ENCODE measurements at regions of chr3 and their contacts with region 1.

Region 1: DNA sequence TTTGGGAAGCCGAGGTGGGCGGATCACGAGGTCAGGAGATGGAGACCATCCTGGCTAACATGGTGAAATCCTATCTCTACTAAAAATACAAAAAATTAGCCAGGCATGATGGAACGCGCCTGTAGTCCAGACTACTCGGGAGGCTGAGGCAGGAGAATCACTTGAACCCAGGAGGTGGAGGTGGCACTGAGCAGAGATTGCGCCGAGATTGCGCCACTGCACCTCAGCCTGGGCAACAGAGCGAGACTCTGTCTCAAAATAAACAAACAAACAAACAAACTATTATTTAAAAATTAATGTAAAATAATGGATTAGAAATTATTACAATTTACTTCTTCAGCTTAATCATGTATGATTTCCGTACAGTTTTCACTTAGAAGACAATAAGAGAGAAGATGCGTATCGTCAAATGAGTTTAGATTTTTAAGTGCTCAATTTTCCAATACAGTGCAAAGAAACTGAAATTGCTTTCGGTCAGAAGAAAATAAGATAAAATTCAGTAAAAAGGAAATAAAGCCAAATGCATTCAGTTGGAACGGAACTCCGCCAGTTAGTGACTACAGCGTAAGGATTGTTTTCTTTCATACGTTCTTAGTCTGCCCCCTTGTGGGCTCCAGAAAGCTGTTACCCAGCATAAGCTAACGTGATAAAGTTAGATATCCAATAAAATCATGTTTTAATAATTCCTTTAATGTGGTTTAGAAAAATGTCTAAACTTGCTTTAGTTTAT is 24.8 kb downstream of the AADAC start:
- DNase-seq: peak in 3 of 6 donors; percentile 46 to 64 (median 57)
- ATAC-seq: peak; percentile 75 to 94 (median 92)
- H3K4me3 ChIP-seq: peak overlapping the region in 2 of 4 donors; percentile 2 to 29
- H3K27ac ChIP-seq: no peak overlapping the region
- H3K4me1 ChIP-seq: peaks cover 0 to 15% (median 7%) of the 10 kb centered on the region in 3 donors
- H3K27me3 ChIP-seq: no peaks in the 10 kb centered on the region
- CTCF ChIP-seq: peak; percentile 53 to 76 (median 69)

Region 2: DNA sequence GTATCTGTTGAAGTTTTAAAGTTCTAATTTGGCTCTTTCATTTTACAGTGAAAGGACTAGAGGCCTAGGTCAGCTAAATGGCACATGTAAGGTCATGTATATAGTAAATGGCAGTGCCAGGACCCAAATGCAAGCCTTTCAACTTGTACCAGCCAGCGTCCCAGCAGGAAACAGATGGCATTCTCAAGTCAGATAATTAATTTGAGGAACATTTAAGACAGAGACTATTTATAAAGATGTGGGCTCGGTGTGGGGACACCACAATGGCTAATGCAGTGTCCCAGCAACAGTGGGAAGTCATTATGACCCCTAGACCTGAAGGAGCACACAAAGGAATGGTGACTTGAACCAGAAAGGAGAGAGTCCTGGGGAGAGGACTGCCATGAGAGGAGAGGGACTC is 939.6 kb before region 1 on chr3:
- intact Hi-C with region 1: no loop called
- DNase-seq: no peak
- ATAC-seq: no peak
- H3K4me3 ChIP-seq: no peak overlapping the region
- H3K27ac ChIP-seq: no peak overlapping the region
- H3K4me1 ChIP-seq: no peaks in the 10 kb centered on the region
- H3K27me3 ChIP-seq: no peaks in the 10 kb centered on the region
- CTCF ChIP-seq: no peak

Region 3: GRCh38 chr3:151439652-151440129 is 399.1 kb before region 1 on chr3:
- intact Hi-C with region 1: loop called in 1 of 3 experiments (anchors 5 kb)
- DNase-seq: peak in 1 of 6 donors; percentile 44
- ATAC-seq: peak; percentile 89 to 96 (median 94)
- H3K4me3 ChIP-seq: no peak overlapping the region
- H3K27ac ChIP-seq: no peak overlapping the region
- H3K4me1 ChIP-seq: no peaks in the 10 kb centered on the region
- H3K27me3 ChIP-seq: no peaks in the 10 kb centered on the region
- CTCF ChIP-seq: peak; percentile 65 to 85 (median 74)

Region 4: DNA sequence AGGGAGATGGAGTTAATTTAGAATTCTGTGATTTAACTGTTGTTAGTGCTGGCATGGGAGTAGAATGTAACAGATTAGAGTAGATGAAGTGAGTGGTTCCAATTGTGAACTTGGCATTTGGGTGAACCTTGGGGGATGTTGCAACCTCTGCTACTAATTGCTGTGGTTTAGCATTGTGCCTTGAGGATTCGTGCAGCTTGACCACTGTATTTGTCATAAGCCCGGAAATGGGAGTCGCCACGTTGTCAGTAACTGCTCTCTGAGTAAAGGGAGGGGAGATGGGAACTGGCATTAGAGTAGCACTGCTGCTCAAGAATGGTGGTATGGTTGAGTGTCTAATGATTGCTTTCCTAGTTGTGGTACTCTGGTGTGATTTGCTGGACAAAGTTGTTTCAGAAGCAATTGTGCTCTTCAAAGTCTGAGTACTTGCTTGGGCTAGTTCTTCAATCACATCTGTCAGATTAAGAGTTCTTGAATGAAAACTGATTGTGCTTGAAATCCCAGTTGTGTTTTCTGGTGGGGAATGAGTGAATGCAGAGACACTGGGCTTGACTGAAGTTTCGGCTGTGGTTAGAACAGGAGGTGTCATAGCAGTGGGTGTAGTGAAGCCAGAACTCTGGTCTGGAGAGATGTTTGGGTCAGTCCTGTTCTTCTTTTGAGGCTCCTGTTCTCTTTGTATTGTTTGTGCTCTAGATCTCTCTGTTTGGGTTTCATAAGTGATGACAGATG is 393.3 kb before region 1 on chr3:
- intact Hi-C with region 1: loop called in 1 of 3 experiments (anchors 5 kb)
- DNase-seq: no peak
- ATAC-seq: peak in 1 of 4 donors; percentile 66
- H3K4me3 ChIP-seq: no peak overlapping the region
- H3K27ac ChIP-seq: no peak overlapping the region
- H3K4me1 ChIP-seq: no peaks in the 10 kb centered on the region
- H3K27me3 ChIP-seq: no peaks in the 10 kb centered on the region
- CTCF ChIP-seq: no peak

Region 5: GRCh38 chr3:151903501-151903991 is 64.8 kb after region 1 on chr3:
- intact Hi-C with region 1: no loop called
- DNase-seq: no peak
- ATAC-seq: peak in 1 of 4 donors; percentile 53
- H3K4me3 ChIP-seq: no peak overlapping the region
- H3K27ac ChIP-seq: no peak overlapping the region
- H3K4me1 ChIP-seq: no peaks in the 10 kb centered on the region
- H3K27me3 ChIP-seq: no peaks in the 10 kb centered on the region
- CTCF ChIP-seq: no peak

Measured in pancreas (tissue), 10 donors.